Calu3 (cell line): ENCODE measurements at regions of chr2 and their contacts with region 1.

Region 1: GRCh38 chr2:158903711-158904443 is 64.6 kb upstream of the TANC1 start:
- DNase-seq: no peak
- H3K4me3 Mint-ChIP-seq: no peak overlapping the region
- H3K27ac Mint-ChIP-seq: no peak overlapping the region
- H3K4me1 Mint-ChIP-seq: no peaks in the 10 kb centered on the region
- H3K27me3 Mint-ChIP-seq: no peaks in the 10 kb centered on the region
- CTCF ChIP-seq: no peak

Region 2: DNA sequence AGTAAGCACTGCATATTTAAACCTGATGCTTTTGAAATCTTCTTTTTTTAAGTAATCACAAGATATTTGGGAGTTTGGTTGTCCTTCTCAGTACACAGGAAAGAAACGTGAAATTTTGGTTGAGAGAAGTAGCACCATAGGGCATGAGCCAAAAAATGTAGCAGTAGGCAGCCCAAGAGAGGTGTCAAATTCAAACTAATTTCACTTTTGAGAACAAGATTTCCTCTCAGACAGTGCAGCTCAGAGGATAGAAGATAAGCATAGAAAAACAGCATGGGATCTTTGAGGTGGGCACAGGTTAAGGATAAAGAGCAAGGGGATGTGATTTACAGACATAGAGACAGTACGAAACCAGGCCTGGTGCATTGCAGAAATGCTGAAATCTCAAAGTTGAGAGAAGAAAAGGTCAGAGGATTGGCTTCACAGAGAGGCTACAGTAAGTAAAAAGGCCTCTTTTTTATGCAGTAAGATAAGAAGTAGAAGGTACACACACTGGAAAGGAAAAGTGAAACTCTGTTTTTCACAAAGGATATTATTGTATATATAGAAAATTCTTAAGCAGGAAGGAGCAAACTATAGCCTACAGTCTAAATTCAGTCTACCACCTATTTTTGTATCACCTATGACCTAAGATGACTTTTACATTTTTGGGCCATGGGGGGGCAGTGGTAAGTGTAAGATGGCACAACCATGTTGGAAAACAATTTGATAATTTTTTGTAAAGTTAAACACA is 357.3 kb before region 1 on chr2:
- CTCF ChIA-PET with region 1: no interaction called
- intact Hi-C with region 1: no loop called
- DNase-seq: no peak
- H3K4me3 Mint-ChIP-seq: no peak overlapping the region
- H3K27ac Mint-ChIP-seq: no peak overlapping the region
- H3K4me1 Mint-ChIP-seq: peaks cover 9% of the 10 kb centered on the region
- H3K27me3 Mint-ChIP-seq: no peaks in the 10 kb centered on the region
- CTCF ChIP-seq: no peak

Region 3: DNA sequence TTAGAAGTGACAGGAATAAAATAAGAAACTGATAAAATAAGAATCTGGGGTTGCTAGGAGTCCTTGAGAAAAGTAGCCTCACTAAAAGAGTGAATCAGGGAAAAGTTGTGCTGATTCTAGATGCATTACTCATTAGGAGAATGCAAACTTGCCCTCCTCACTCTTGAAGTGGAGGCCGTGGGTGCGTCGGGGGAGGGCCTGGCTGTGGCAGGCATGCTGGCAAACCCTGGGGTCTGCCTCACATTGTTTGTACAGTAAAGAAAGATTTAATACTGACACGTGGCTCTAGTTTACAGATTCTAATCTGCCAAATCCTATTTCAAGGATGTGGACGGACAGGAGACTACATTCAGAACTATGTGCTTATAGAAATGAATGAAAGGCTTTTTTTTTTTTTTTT is 106.5 kb after region 1 on chr2:
- CTCF ChIA-PET with region 1: no interaction called
- intact Hi-C with region 1: no loop called
- DNase-seq: no peak
- H3K4me3 Mint-ChIP-seq: no peak overlapping the region
- H3K27ac Mint-ChIP-seq: no peak overlapping the region
- H3K4me1 Mint-ChIP-seq: peaks cover 22% of the 10 kb centered on the region
- H3K27me3 Mint-ChIP-seq: no peaks in the 10 kb centered on the region
- CTCF ChIP-seq: no peak

Region 4: DNA sequence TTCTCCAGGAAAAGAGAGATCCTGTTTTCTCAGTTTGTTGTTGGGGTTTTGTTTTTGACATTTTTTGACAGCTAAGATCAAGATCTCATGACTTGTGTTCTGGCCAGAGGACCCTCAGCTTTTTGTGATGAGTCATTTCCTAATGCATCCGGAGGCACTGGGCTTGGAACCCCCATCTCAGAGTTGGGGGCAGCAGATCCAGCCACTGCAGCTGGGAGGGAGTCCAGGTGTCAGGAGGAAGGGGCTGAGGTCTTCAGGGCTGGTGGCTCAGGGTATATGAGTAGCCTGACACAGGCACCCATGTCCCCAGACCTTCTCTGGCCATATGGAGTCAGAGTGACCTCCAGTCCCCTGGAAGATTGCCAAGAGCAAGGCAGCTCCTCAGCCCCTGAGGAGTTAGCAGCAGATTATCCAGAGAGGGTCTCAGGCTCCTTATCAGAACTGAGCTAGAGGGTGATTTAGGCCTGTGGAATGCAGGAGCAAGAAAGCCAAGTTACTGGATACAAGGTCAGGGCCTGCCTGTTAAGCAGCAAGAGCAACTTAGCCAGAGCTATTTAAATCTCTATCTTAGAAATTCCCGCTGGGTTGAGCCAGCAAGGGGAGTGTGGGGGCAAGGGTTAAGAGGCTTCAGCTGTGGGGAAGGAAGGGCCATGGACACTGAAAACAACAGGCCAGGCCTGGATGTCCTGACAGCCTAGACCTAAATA is 127.0 kb after region 1 on chr2:
- CTCF ChIA-PET with region 1: no interaction called
- intact Hi-C with region 1: loop called (anchors 5 kb)
- DNase-seq: peak; percentile 23
- H3K4me3 Mint-ChIP-seq: no peak overlapping the region
- H3K27ac Mint-ChIP-seq: peak overlapping the region; percentile 28
- H3K4me1 Mint-ChIP-seq: peaks cover 33% of the 10 kb centered on the region
- H3K27me3 Mint-ChIP-seq: no peaks in the 10 kb centered on the region
- CTCF ChIP-seq: no peak

Region 5: GRCh38 chr2:159185401-159186130 is 281.7 kb after region 1 on chr2:
- CTCF ChIA-PET with region 1: no interaction called
- intact Hi-C with region 1: no loop called
- DNase-seq: peak; percentile 19
- H3K4me3 Mint-ChIP-seq: no peak overlapping the region
- H3K27ac Mint-ChIP-seq: no peak overlapping the region
- H3K4me1 Mint-ChIP-seq: no peaks in the 10 kb centered on the region
- H3K27me3 Mint-ChIP-seq: no peaks in the 10 kb centered on the region
- CTCF ChIP-seq: peak; percentile 19